Brain microvascular endothelial cell (primary cell): ENCODE measurements at regions of chr10 and their contacts with region 1.

Region 1: DNA sequence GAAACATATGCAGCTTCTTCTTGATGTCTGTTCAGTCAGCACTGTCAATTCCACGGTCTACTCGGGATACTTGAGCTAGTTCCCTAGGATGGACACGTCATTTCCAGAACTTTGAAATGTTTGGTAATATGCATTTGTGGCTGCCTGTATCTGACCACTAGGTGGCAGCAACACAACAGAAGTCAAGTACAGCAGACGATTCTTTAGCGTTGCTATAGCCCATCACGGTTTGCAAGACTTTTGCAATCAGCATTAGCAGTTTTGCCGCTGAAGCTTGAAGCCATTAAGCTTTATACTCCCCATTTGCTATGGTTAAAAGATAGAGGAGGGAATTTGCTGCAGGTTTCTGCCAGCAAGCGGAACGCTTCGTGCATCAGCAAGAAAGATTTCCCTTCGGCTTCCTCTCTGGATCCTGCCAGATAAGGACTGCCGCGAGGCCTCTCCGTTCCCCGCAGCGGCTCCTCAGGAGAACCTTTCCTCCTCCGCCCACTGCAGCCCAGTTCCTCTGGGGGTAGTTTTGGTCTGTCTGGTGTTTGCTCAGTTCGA is 63.5 kb downstream of the ABCC2 start:
- DNase-seq: peak; percentile 92
- H3K4me3 ChIP-seq: peak overlapping the region; percentile 26
- H3K27ac ChIP-seq: no peak overlapping the region
- H3K27me3 ChIP-seq: no peaks in the 10 kb centered on the region
- CTCF ChIP-seq: peak; percentile 90

Region 2: DNA sequence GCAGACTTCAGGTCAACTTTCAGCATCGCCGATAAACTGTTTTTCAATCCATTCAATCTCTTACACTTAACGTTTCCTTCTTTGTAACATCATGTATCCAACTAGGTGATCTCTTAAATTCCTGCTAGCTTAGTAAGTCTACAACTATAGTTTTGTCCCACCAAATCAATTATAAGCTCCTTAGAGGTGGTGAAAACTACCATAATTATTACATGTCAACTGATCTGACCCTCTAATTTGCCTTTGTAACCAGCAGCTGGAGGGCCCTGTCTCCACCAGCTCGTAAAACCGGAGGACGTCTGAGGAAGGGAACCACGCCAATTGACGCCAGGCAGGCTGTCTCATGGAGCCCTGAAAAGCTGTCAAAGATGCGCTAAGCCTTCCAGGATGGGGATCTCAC is 50.0 kb after region 1 on chr10:
- in situ Hi-C with region 1: no loop called
- DNase-seq: no peak
- H3K4me3 ChIP-seq: no peak overlapping the region
- H3K27ac ChIP-seq: no peak overlapping the region
- H3K27me3 ChIP-seq: no peaks in the 10 kb centered on the region
- CTCF ChIP-seq: no peak

Region 3: GRCh38 chr10:100158044-100158808 is 312.3 kb after region 1 on chr10:
- in situ Hi-C with region 1: loop called (anchors 25 kb)
- DNase-seq: no peak
- H3K4me3 ChIP-seq: no peak overlapping the region
- H3K27ac ChIP-seq: no peak overlapping the region
- H3K27me3 ChIP-seq: no peaks in the 10 kb centered on the region
- CTCF ChIP-seq: no peak

Region 4: DNA sequence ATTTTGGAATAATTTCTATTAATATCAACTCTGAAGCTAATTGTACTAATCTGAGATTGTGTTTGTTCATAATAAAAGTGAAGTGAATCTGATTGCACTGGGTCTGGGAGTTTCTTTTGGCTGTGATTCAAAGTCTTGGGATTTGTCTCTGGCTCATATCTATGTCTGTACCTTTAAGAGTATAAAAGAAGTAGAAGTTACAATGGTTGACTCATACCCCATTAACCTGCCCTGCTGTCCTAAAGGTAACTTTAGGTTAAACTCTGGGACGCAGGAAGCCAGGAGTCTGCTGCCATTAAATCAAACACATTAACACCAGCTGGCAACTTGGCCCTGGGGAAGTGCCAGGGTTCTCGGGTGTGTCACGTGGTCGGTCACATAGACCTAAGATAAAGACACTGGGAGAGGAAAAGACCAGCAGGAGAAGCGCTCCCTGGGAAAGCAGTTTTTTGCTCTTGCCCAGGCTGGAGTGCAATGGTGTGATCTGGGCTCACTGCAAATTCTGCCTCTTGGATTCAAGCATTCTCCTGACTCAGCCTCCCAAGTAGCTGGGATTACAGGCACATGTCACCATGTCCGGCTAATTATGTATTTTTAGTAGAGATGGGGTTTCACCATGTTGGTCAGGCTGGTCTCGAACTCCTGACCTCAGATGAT is 519.0 kb after region 1 on chr10:
- in situ Hi-C with region 1: no loop called
- DNase-seq: peak; percentile 60
- H3K4me3 ChIP-seq: no peak overlapping the region
- H3K27ac ChIP-seq: peak overlapping the region; percentile 52
- H3K27me3 ChIP-seq: no peaks in the 10 kb centered on the region
- CTCF ChIP-seq: no peak